Esophagus muscularis mucosa (tissue), 4 donors: ENCODE measurements at regions of chr4 and their contacts with region 1.

Region 1: DNA sequence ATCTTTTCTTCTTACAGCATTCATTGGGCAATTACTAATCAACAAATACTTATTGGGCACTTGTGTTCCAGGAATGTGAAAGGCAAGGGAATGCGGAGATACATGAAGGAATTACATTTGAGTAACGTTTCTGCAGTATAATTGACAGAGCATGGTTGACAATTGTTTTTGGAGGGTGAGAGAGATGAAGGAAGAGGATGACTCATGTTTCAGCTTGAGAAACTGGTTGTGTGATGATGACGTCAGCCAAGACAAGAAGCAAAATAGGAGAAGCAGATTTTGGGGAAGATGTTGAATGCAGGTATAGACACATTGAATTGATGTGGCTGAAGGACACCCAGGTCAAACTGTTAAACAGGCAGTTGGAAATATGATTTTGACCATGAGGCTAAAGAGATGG is 8.0 kb upstream of the CPEB2 start:
- DNase-seq: no peak
- H3K4me3 ChIP-seq: no peak overlapping the region
- H3K27ac ChIP-seq: no peak overlapping the region
- H3K4me1 ChIP-seq: no peaks in the 10 kb centered on the region
- H3K27me3 ChIP-seq: no peaks in the 10 kb centered on the region
- CTCF ChIP-seq: no peak
- EP300 ChIP-seq: no peak
- POLR2A ChIP-seq: no peak

Region 2: GRCh38 chr4:14862891-14863290 is 131.3 kb before region 1 on chr4:
- intact Hi-C with region 1: no loop called
- DNase-seq: no peak
- H3K4me3 ChIP-seq: peak overlapping the region; percentile 11 to 26 (median 18)
- H3K27ac ChIP-seq: peak overlapping the region; percentile 80 to 87 (median 84)
- H3K4me1 ChIP-seq: peaks cover 16 to 44% (median 40%) of the 10 kb centered on the region in 4 donors
- H3K27me3 ChIP-seq: no peaks in the 10 kb centered on the region
- CTCF ChIP-seq: no peak
- EP300 ChIP-seq: no peak
- POLR2A ChIP-seq: no peak

Region 3: GRCh38 chr4:14977830-14978229 is 16.4 kb before region 1 on chr4:
- intact Hi-C with region 1: no loop called
- DNase-seq: no peak
- H3K4me3 ChIP-seq: no peak overlapping the region
- H3K27ac ChIP-seq: no peak overlapping the region
- H3K4me1 ChIP-seq: peaks cover 0 to 11% (median 6%) of the 10 kb centered on the region in 4 donors
- H3K27me3 ChIP-seq: no peaks in the 10 kb centered on the region
- CTCF ChIP-seq: no peak
- EP300 ChIP-seq: no peak
- POLR2A ChIP-seq: no peak

Region 4: DNA sequence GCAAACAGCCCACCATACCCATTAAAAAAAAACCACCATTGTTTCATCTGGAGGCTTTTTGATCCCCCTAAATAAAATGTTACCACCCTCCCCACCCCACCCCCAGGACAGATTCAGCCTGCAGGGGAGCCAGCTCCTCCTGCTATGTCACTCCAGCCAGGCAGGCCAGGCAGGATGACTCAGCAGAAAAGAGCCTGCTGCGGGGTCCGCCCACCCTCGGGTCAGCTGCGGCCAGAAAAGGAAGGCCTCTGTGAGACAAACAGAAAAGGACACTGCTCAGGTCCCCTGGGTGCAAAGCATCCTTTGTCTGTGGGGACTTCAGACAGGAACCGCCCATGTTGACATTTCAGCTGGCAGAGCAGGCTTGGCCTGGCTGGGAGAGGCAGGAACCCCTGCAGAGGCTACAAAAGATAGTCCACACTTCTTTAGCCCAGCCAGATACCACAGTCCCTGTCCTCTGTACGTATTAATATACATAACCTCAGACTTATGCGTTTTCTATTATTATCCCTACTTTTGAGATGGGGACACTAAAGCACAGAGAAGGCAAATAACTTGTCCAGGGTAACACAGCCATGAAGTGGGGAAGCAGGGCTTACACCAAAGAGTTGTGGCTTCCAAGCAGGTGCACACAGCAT is 155.7 kb after region 1 on chr4:
- intact Hi-C with region 1: loop called (anchors 10 kb)
- DNase-seq: peak; percentile 93
- H3K4me3 ChIP-seq: no peak overlapping the region
- H3K27ac ChIP-seq: peak overlapping the region; percentile 24 to 56 (median 45)
- H3K4me1 ChIP-seq: peaks cover 26 to 30% (median 28%) of the 10 kb centered on the region in 4 donors
- H3K27me3 ChIP-seq: no peaks in the 10 kb centered on the region
- CTCF ChIP-seq: peak in 1 of 3 experiments; percentile 29
- EP300 ChIP-seq: no peak
- POLR2A ChIP-seq: no peak